Esophagus muscularis mucosa (tissue), 4 donors: ENCODE measurements at regions of chr22 and their contacts with region 1.

Region 1: DNA sequence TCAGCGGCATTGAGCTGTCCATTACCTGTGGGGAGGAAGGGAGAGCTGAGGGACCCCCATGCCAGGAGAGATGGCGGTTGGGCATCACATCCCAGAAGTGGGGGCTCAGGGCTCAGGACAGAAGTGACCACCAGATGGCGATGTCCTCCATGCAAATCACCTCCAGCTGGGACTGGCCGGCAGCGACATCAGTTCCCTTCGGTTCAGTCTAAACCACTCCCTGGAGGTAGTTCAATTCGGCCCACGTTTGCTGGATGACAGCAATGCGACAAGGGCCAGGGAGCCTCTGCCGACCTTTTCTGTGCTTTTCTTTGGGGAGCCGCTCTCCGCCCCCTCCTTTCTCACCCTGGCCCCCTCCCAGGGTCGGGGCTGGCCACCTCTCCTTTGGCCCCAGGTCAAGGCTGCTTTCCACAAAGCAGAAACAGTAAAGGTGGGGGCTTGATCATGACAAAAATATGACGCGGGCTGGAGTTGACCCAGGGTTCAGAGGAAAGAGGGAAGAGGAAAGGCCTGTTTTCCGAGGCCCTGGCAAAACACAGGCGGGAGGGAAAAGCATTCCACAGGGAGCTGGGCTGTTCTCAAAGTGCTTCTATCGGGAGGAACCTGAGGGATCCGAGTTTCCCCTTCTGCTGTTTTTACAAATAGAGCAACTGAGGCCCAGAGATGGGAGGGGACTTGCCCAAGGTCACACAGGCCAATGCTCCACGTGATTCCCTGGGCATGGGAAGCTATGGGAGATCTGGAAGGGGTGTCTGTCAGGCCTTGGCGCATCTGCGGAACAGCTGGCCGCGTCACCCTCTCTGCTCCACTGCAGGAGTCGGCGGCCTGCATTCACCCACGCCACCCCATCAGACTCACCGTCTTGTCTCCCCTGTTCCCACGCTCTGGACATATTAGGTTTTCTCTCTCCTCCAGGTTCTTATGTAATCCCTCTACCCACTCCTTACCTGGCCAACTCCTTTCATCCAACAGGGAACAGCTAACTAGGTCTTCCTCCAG is 54.7 kb downstream of the FBXO7 start:
- DNase-seq: peak; percentile 98
- H3K4me3 ChIP-seq: peak overlapping the region in 3 of 4 donors; percentile 15 to 24 (median 20)
- H3K27ac ChIP-seq: peak overlapping the region; percentile 57 to 81 (median 75)
- H3K4me1 ChIP-seq: peaks cover 49 to 59% (median 56%) of the 10 kb centered on the region in 4 donors
- H3K27me3 ChIP-seq: peaks cover 0 to 16% (median 0%) of the 10 kb centered on the region in 4 donors
- CTCF ChIP-seq: peak; percentile 86 to 91 (median 90)
- EP300 ChIP-seq: no peak
- POLR2A ChIP-seq: no peak

Region 2: GRCh38 chr22:32660292-32660691 is 131.0 kb after region 1 on chr22:
- intact Hi-C with region 1: loop called (anchors 2 kb)
- DNase-seq: no peak
- H3K4me3 ChIP-seq: no peak overlapping the region
- H3K27ac ChIP-seq: no peak overlapping the region
- H3K4me1 ChIP-seq: peaks cover 10 to 25% (median 18%) of the 10 kb centered on the region in 4 donors
- H3K27me3 ChIP-seq: peaks cover 0 to 4% (median 0%) of the 10 kb centered on the region in 4 donors
- CTCF ChIP-seq: peak; percentile 69 to 81 (median 78)
- EP300 ChIP-seq: no peak
- POLR2A ChIP-seq: no peak

Region 3: GRCh38 chr22:32985899-32986765 is 456.8 kb after region 1 on chr22:
- intact Hi-C with region 1: loop called (anchors 5 kb)
- DNase-seq: no peak
- H3K4me3 ChIP-seq: no peak overlapping the region
- H3K27ac ChIP-seq: peak overlapping the region in 1 of 4 donors; percentile 46
- H3K4me1 ChIP-seq: peaks cover 10 to 25% (median 14%) of the 10 kb centered on the region in 4 donors
- H3K27me3 ChIP-seq: no peaks in the 10 kb centered on the region
- CTCF ChIP-seq: peak; percentile 84 to 95 (median 92)
- EP300 ChIP-seq: no peak
- POLR2A ChIP-seq: no peak

Region 4: GRCh38 chr22:33000342-33001280 is 471.3 kb after region 1 on chr22:
- intact Hi-C with region 1: loop called (anchors 2 kb)
- DNase-seq: peak; percentile 91
- H3K4me3 ChIP-seq: no peak overlapping the region
- H3K27ac ChIP-seq: no peak overlapping the region
- H3K4me1 ChIP-seq: peaks cover 8 to 29% (median 16%) of the 10 kb centered on the region in 4 donors
- H3K27me3 ChIP-seq: no peaks in the 10 kb centered on the region
- CTCF ChIP-seq: peak; percentile 88 to 93 (median 88)
- EP300 ChIP-seq: no peak
- POLR2A ChIP-seq: no peak

Region 5: GRCh38 chr22:33049119-33049729 is 519.9 kb after region 1 on chr22:
- intact Hi-C with region 1: loop called (anchors 2 kb)
- DNase-seq: no peak
- H3K4me3 ChIP-seq: no peak overlapping the region
- H3K27ac ChIP-seq: no peak overlapping the region
- H3K4me1 ChIP-seq: no peaks in the 10 kb centered on the region
- H3K27me3 ChIP-seq: peaks cover 0 to 19% (median 3%) of the 10 kb centered on the region in 4 donors
- CTCF ChIP-seq: peak; percentile 70 to 92 (median 83)
- EP300 ChIP-seq: no peak
- POLR2A ChIP-seq: no peak